Spleen (tissue), 13 donors: ENCODE measurements at regions of chr16 and their contacts with region 1.

Region 1: GRCh38 chr16:67428146-67428731 is 2.7 kb upstream of the HSD11B2 start:
- DNase-seq: peak; percentile 89
- H3K4me3 ChIP-seq: no peak overlapping the region
- H3K27ac ChIP-seq: no peak overlapping the region
- H3K4me1 ChIP-seq: peaks cover 28 to 54% (median 47%) of the 10 kb centered on the region in 6 donors
- H3K27me3 ChIP-seq: peaks cover 0 to 66% (median 16%) of the 10 kb centered on the region in 7 donors
- CTCF ChIP-seq: peak; percentile 59 to 88 (median 84)
- POLR2A ChIP-seq: no peak

Region 2: DNA sequence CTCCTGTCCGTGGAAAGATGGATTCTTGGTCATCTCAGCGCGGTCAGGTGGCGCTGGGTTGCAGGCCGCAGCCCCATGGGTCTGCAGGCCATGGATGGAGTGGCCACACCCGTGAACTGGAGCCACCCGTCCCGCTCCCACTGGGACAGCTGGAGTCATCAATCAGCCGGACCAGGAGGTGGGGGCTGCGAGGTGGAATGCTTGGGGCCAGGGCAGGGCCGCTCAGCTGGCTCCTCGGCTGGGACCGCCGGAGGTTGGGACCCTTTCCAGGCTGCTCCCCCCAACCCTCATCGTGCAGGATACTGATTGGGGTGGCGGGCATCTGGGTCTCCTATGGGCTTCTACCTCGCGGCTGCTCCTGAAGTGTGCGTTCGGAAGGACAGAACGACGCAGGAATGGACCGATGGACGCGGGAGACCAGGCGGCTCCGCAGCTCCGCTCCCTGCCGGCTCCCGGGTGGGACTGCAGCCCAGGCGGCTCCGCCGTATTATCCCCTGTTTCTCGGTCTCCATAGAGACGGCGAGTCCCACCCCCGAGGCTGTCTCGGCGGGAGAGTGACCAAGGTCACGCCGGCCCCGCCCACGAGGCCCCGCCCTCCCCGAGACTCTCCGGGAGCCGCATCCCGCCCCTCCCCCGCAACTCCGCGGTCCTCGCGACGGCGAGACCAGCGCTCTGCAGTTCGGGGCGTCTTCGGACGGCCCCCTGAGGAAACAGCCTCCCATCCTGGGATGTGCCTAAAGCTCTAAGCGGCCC is 35.0 kb before region 1 on chr16 and contains the start of gene TPPP3:
- intact Hi-C with region 1: no loop called
- DNase-seq: peak; percentile 88
- H3K4me3 ChIP-seq: peak within 1 kb of the TSS in 7 of 8 donors; percentile 25 to 62 (median 32)
- H3K27ac ChIP-seq: peak within 1 kb of the TSS in 7 of 8 donors; percentile 27 to 69 (median 36)
- H3K4me1 ChIP-seq: peaks cover 31 to 88% (median 56%) of the 10 kb centered on the region in 6 donors
- H3K27me3 ChIP-seq: peaks cover 0 to 46% (median 19%) of the 10 kb centered on the region in 7 donors
- CTCF ChIP-seq: peak; percentile 20 to 81 (median 68)
- POLR2A ChIP-seq: no peak
- total RNA-seq, gene TPPP3: 2.5 to 13.9 (median 9.9) TPM

Region 3: DNA sequence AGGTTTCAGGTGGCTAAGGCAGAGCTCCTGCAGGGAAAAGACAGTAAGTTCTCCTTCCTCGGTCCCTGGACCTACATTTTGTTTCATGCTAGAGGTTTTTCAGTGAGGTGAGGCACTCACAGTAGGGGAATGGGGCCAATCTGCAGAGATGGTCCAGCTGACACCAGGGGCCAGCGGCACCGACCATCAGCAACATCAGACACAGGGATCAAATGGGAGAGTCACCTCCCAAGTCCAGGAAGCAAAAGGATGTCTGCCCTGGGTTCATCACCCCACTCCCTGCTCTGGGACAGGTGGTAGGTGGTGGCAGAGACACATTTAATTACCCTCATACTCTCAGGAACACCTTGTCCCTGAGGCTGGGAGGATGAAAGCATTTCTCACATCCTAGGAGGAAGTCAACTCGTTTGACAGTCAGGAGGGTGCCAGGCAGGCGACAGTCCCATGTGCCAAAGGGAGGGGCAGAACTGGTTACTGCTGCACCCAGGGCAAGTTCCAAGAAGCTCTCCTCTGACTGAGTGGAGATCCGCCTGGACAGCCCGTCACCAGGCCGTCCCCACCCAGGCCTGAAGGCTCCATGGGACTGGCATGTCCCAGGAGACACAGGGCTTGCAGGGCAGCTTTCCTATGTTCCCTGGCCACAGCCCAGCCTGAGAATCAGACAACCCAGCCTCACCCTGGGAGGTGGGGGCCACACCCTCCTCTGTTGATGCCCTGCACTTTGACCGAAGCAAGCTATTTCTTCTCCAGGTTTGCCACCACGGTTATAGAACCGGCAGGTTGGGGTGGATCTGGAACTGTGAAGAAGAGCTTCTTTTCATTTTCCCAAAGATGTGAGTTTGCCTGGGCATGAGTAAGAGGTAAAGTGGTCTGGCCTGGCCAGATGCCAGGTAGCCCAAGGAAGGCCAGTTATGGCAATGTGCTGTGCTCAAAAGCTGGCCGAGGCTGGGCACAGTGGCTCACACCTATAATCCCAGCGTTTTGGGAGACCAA is 33.7 kb after region 1 on chr16:
- intact Hi-C with region 1: loop called (anchors 5 kb)
- DNase-seq: no peak
- H3K4me3 ChIP-seq: no peak overlapping the region
- H3K27ac ChIP-seq: peak overlapping the region in 1 of 8 donors; percentile 85
- H3K4me1 ChIP-seq: peaks cover 53 to 100% (median 93%) of the 10 kb centered on the region in 6 donors
- H3K27me3 ChIP-seq: no peaks in the 10 kb centered on the region
- CTCF ChIP-seq: no peak
- POLR2A ChIP-seq: no peak